Endothelial cell of umbilical vein (primary cell): ENCODE measurements at regions of chr6 and their contacts with region 1.

Region 1: GRCh38 chr6:155472886-155473285 is 17.2 kb upstream of the NOX3 start:
- DNase-seq: no peak
- H3K4me3 ChIP-seq: no peak overlapping the region
- H3K27ac ChIP-seq: no peak overlapping the region
- H3K4me1 ChIP-seq: no peaks in the 10 kb centered on the region
- H3K27me3 ChIP-seq: no peaks in the 10 kb centered on the region
- CTCF ChIP-seq: no peak
- POLR2A ChIP-seq: no peak

Region 2: DNA sequence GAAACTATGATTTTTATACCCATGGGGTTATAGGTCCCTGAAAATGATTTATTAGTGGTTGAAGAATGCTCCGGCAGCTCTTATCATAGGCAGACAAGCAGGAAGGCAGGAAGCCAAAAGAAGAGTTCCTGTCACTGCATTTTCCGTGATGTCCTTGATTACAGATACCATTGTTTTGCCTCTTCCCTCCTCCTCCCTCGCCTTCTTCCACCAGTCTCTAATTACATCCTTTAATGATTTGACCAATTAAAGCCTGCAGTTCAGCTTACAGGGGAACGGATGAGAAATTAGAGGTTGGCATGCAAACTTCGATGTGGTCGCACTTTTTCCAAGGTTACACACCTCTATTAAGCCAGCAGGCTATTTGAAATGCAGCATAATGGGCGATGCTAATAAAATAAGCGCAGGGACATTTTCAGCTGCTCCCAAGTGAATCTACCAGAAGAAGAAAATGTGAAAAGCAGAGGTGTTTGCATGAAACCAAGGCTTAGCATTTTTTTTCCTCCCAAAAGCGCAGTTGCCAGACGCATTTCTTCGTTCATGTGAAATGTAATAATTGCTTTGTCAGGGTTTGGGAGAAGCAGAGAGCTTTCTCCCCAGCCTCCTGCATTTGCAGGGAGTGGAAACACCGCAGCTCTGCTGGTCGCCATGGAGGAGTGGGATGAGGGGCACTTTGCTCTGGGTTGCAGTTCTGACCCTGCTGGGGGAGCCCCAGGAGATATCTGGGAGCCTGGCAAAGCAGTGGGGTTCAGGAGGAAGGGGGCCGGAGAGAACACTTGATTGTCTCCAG is 23.2 kb before region 1 on chr6:
- CTCF ChIA-PET with region 1: interaction called, 5 read pairs
- POLR2A ChIA-PET with region 1: no interaction called
- dilution Hi-C with region 1: no loop called
- intact Hi-C with region 1: loop called (anchors 2 kb)
- DNase-seq: peak; percentile 48
- H3K4me3 ChIP-seq: no peak overlapping the region
- H3K27ac ChIP-seq: no peak overlapping the region
- H3K4me1 ChIP-seq: peaks cover 7% of the 10 kb centered on the region
- H3K27me3 ChIP-seq: no peaks in the 10 kb centered on the region
- CTCF ChIP-seq: no peak
- POLR2A ChIP-seq: no peak

Region 3: DNA sequence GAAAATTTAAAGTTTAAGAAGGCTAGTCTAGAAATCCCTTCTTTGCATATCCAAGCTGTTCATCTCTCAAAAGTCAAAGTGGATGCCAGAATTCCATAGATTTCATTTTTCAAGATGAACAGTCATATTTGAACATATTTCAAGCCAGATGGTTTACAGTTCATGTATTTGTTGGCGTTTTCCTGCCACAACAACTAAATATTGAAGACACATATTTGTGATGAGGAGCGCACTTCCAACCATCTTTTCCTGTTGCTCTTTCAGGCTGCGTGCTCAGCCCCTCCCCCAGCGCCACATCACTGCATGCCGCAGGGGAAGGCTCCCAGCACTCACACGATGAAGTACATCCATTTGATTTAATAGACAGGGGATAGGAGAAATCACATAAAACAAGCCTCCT is 11.3 kb before region 1 on chr6:
- CTCF ChIA-PET with region 1: no interaction called
- POLR2A ChIA-PET with region 1: no interaction called
- dilution Hi-C with region 1: no loop called
- intact Hi-C with region 1: no loop called
- DNase-seq: no peak
- H3K4me3 ChIP-seq: no peak overlapping the region
- H3K27ac ChIP-seq: no peak overlapping the region
- H3K4me1 ChIP-seq: no peaks in the 10 kb centered on the region
- H3K27me3 ChIP-seq: no peaks in the 10 kb centered on the region
- CTCF ChIP-seq: no peak
- POLR2A ChIP-seq: no peak

Region 4: GRCh38 chr6:155561257-155561965 is 88.5 kb after region 1 on chr6:
- CTCF ChIA-PET with region 1: no interaction called
- POLR2A ChIA-PET with region 1: no interaction called
- dilution Hi-C with region 1: no loop called
- intact Hi-C with region 1: no loop called
- DNase-seq: no peak
- H3K4me3 ChIP-seq: no peak overlapping the region
- H3K27ac ChIP-seq: no peak overlapping the region
- H3K4me1 ChIP-seq: no peaks in the 10 kb centered on the region
- H3K27me3 ChIP-seq: no peaks in the 10 kb centered on the region
- CTCF ChIP-seq: no peak
- POLR2A ChIP-seq: no peak